Posterior vena cava (tissue), 2 donors: ENCODE measurements at regions of chr1 and their contacts with region 1.

Region 1: GRCh38 chr1:182789138-182790076 is at the start of gene NPL:
- DNase-seq: peak; percentile 96
- total RNA-seq, gene NPL: 11.9 to 25.2 TPM

Region 2: GRCh38 chr1:182460550-182460951 is 328.9 kb before region 1 on chr1:
- intact Hi-C with region 1: no loop called
- DNase-seq: no peak

Region 3: DNA sequence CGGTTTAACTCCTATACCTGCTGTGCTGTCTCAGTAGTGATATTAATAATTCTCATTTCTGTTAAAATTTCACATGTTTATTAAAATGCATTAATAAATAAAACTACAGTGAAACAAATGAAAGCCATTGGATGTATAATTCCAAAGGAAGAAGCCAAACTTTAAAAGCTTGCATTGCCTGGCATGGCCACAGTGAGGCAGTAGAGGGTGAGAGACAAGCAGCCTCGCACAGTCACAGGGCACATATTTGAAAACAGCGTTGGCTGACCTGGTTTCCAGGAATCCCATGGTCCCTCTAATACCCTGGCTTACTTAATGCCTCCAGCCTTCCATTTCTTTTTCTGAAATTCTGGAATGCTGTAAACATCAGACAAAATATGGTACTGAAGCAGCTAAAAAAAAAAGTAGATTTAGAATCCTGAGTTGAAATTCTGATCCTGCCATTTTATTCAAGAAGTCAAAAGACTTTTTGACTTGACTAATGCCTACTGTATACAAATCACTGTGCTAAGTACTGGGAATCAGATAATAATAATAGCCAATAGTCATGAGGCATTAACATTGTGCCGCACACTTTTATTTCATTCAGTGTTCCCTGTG is 193.7 kb before region 1 on chr1:
- intact Hi-C with region 1: loop called in 1 of 2 experiments (anchors 5 kb)
- DNase-seq: peak; percentile 90

Region 4: GRCh38 chr1:183023601-183024316 is 234.4 kb after region 1 on chr1:
- intact Hi-C with region 1: no loop called
- DNase-seq: peak; percentile 83